Ascending aorta (tissue), 2 donors: ENCODE measurements at regions of chr19 and their contacts with region 1.

Region 1: GRCh38 chr19:6218491-6219162 is 61.1 kb downstream of the MLLT1 start:
- DNase-seq: peak; percentile 59 to 94
- H3K4me3 ChIP-seq: no peak overlapping the region
- H3K27ac ChIP-seq: no peak overlapping the region
- H3K4me1 ChIP-seq: peaks cover 4 to 9% of the 10 kb centered on the region in 2 donors
- H3K27me3 ChIP-seq: no peaks in the 10 kb centered on the region
- CTCF ChIP-seq: peak; percentile 95 to 98 (median 97)

Region 2: GRCh38 chr19:6164906-6165531 is 53.6 kb before region 1 on chr19:
- intact Hi-C with region 1: no loop called
- DNase-seq: peak in 1 of 2 donors; percentile 27
- H3K4me3 ChIP-seq: no peak overlapping the region
- H3K27ac ChIP-seq: no peak overlapping the region
- H3K4me1 ChIP-seq: no peaks in the 10 kb centered on the region
- H3K27me3 ChIP-seq: no peaks in the 10 kb centered on the region
- CTCF ChIP-seq: no peak

Region 3: GRCh38 chr19:6241680-6242377 is 23.2 kb after region 1 on chr19:
- intact Hi-C with region 1: no loop called
- DNase-seq: no peak
- H3K4me3 ChIP-seq: no peak overlapping the region
- H3K27ac ChIP-seq: no peak overlapping the region
- H3K4me1 ChIP-seq: peaks cover 10 to 30% of the 10 kb centered on the region in 2 donors
- H3K27me3 ChIP-seq: no peaks in the 10 kb centered on the region
- CTCF ChIP-seq: no peak

Region 4: GRCh38 chr19:6297202-6297601 is 78.6 kb after region 1 on chr19:
- intact Hi-C with region 1: loop called (anchors 1 kb)
- DNase-seq: no peak
- H3K4me3 ChIP-seq: no peak overlapping the region
- H3K27ac ChIP-seq: no peak overlapping the region
- H3K4me1 ChIP-seq: no peaks in the 10 kb centered on the region
- H3K27me3 ChIP-seq: no peaks in the 10 kb centered on the region
- CTCF ChIP-seq: no peak

Region 5: GRCh38 chr19:6354098-6354674 is 135.6 kb after region 1 on chr19:
- intact Hi-C with region 1: loop called (anchors 10 kb)
- DNase-seq: no peak
- H3K4me3 ChIP-seq: no peak overlapping the region
- H3K27ac ChIP-seq: no peak overlapping the region
- H3K4me1 ChIP-seq: no peaks in the 10 kb centered on the region
- H3K27me3 ChIP-seq: no peaks in the 10 kb centered on the region
- CTCF ChIP-seq: peak in 1 of 3 experiments; percentile 52